H1 (cell line): ENCODE measurements at regions of chr2 and their contacts with region 1.

Region 1: GRCh38 chr2:44981136-44982108 is 27.8 kb downstream of the SIX2 start:
- DNase-seq: peak in 1 of 2 experiments; percentile 93
- H3K4me3 ChIP-seq: no peak overlapping the region
- H3K27ac ChIP-seq: no peak overlapping the region
- H3K4me1 ChIP-seq: peaks cover 0 to 4% (median 0%) of the 10 kb centered on the region in 4 experiments; a peak in 2 of 7 replicates
- H3K27me3 ChIP-seq: no peaks in the 10 kb centered on the region
- CTCF ChIP-seq: peak; percentile 88 to 95 (median 94)
- EP300 ChIP-seq: no peak
- POLR2A ChIP-seq: no peak
- RAD21 ChIP-seq: peak; percentile 98

Region 2: DNA sequence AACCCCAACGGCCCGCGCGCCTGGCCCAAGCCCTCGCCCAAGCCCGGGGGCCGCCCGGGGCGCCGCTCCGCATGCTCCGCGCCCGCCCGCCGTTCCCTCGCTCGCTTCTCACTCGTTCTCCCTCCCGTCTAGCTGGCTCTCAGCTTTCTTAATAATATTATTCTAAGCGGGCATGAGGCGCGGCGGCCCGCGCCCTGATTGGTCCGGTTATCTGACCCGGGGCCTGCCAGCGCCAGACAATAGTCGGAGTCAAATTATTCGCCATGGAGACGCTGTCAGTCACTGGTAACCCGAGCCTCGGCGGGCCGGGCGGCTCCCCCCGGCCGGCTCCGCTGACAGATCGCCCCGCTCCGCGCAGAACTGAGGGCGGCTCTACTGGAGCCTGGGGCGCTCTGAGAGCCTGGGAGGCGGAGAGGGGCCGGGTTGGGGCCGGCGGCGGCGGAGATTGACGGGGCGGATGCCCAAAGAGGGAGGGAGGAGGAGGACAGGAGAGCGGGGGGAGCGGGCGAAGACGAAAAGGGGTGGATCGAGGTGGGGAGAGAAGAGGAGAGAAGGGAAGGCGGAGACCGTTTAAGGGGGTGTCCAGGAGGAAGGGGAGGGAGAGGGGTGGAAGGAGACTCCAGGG is 28.0 kb after region 1 on chr2 and contains the start of gene SIX2:
- CTCF ChIA-PET with region 1: interaction called, 46 read pairs
- POLR2A ChIA-PET with region 1: interaction called, 3 read pairs
- DNase-seq: peak; percentile 92 to 93
- H3K4me3 ChIP-seq: peak within 1 kb of the TSS; percentile 27 to 64 (median 36)
- H3K27ac ChIP-seq: no peak within 1 kb of the TSS
- H3K4me1 ChIP-seq: peaks cover 0 to 33% (median 16%) of the 10 kb centered on the region in 4 experiments; a peak in 5 of 7 replicates
- H3K27me3 ChIP-seq: peaks cover 75 to 90% (median 86%) of the 10 kb centered on the region in 4 experiments
- CTCF ChIP-seq: no peak
- EP300 ChIP-seq: peak in 1 of 2 experiments; percentile 54; a peak in 1 of 3 replicates
- POLR2A ChIP-seq: no peak
- RAD21 ChIP-seq: no peak; a peak in 1 of 4 replicates
- total RNA-seq, gene SIX2: 0.84 and 1.0 TPM in 2 replicates